PC-3 (cell line): ENCODE measurements at regions of chr2 and their contacts with region 1.

Region 1: GRCh38 chr2:217064234-217065024 is 204.6 kb upstream of the TNP1 start:
- DNase-seq: no peak
- ATAC-seq: no peak
- H3K4me3 ChIP-seq: no peak overlapping the region
- H3K27ac ChIP-seq: no peak overlapping the region
- H3K4me1 ChIP-seq: peaks cover 22% of the 10 kb centered on the region
- H3K27me3 ChIP-seq: no peaks in the 10 kb centered on the region
- CTCF ChIP-seq: no peak

Region 2: GRCh38 chr2:217160978-217161973 is 96.8 kb after region 1 on chr2:
- CTCF ChIA-PET with region 1: interaction called, 3 read pairs
- POLR2A ChIA-PET with region 1: interaction called, 7 read pairs
- intact Hi-C with region 1: loop called (anchors 1 kb)
- DNase-seq: peak; percentile 50
- ATAC-seq: no peak
- H3K4me3 ChIP-seq: no peak overlapping the region
- H3K27ac ChIP-seq: peak overlapping the region; percentile 91
- H3K4me1 ChIP-seq: peaks cover 35% of the 10 kb centered on the region
- H3K27me3 ChIP-seq: no peaks in the 10 kb centered on the region
- CTCF ChIP-seq: no peak

Region 3: DNA sequence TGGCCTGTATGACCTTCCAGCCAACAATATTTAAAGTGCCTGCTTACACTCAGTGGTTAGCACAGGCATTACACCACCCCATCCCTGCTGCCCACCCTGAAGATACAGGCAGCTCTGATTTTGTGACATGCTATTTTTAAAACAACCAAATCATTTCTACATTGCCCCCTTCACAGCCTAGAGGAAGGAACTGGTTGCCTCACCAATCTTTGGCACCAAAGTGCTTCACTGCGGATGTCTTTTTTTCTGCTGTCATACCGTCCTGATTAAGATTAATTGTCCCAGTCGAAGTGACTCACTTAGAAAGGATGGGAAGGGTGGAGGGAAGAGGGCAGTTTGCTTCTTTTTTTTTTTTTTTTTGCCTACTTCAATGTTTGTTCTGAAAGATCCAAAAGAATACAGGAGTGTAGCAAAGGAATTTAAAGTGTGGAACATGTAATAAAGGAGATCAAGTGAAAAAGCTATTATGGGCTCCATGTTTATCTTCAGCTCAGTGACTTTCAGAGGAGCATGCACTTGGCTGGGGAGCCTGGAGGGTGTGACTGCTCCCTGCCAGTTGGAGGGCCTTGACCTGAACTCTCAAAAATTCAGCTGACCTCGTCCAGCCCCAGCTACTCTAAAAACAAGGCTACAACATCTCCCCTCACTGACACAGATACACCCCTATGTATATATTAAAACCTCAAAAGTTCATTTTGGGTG is 296.5 kb after region 1 on chr2:
- CTCF ChIA-PET with region 1: no interaction called
- POLR2A ChIA-PET with region 1: no interaction called
- intact Hi-C with region 1: loop called (anchors 10 kb)
- DNase-seq: peak; percentile 87
- ATAC-seq: peak; percentile 85
- H3K4me3 ChIP-seq: no peak overlapping the region
- H3K27ac ChIP-seq: peak overlapping the region; percentile 38
- H3K4me1 ChIP-seq: peaks cover 29% of the 10 kb centered on the region
- H3K27me3 ChIP-seq: no peaks in the 10 kb centered on the region
- CTCF ChIP-seq: no peak